Gastrocnemius medialis (tissue), 4 donors: ENCODE measurements at regions of chr5 and their contacts with region 1.

Region 1: DNA sequence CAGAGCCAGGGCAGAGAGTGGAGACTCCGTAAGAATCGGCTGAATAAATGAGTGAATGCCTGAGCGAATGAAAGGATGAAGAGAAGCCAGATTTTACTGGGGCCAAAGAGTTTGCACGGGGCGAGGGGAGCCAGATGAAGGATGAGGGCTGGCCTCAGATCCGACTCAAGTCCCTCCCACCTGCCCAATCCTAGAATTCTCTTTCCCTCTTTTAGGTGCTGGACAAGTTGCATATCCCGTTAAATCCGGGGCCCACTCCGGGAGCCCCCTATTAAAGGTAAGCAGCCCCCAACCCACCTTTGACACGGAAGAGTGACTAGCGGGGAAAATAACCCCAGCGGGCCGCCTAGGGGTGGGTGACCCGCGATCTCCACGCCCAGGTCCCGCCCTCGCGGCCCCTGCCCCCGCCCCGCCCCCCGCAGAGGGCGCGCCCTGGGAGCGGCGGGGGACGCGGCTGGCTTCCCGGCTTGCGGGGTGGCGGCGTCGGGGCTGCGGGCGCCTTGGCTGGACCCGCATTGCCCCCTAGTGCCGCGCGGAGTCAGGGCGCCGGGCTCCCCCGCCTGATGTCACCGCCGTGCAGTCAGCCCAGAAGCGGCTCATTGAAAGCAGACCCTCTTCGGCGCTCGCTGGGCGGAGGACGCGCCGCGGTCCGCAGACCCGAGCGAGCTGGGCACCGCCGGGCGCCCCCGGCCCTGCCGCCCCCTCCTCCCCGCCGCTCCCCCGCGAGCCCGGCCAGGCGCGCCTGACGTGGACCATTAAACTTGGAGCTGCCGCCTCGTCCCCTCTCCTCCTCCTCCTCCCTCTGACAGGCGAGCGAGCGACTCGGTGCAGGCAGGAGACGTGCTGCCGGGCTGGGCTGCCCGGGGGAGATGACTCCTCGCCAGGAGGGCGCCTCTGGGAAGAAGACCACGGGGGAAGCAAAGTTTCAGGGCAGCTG is at the start of gene ADRA1B:
- DNase-seq: peak; percentile 38 to 39
- ATAC-seq: peak; percentile 71 to 81
- H3K4me3 ChIP-seq: peak within 1 kb of the TSS; percentile 43 to 55 (median 44)
- H3K27ac ChIP-seq: peak within 1 kb of the TSS; percentile 35 to 47 (median 39)
- H3K4me1 ChIP-seq: no peaks in the 10 kb centered on the region
- H3K27me3 ChIP-seq: peaks cover 6 to 20% (median 7%) of the 10 kb centered on the region in 3 donors
- CTCF ChIP-seq: peak; percentile 28 to 80 (median 57)
- POLR2A ChIP-seq: no peak
- total RNA-seq, gene ADRA1B: 0.61 to 1.9 (median 0.94) TPM

Region 2: GRCh38 chr5:159444441-159445082 is 471.6 kb before region 1 on chr5:
- in situ Hi-C with region 1: loop called in 1 of 4 experiments (anchors 25 kb)
- intact Hi-C with region 1: loop called (anchors 5 kb)
- DNase-seq: no peak
- ATAC-seq: peak; percentile 39 to 58
- H3K4me3 ChIP-seq: no peak overlapping the region
- H3K27ac ChIP-seq: no peak overlapping the region
- H3K4me1 ChIP-seq: no peaks in the 10 kb centered on the region
- H3K27me3 ChIP-seq: no peaks in the 10 kb centered on the region
- CTCF ChIP-seq: peak in 2 of 5 experiments; percentile 32 to 39
- POLR2A ChIP-seq: no peak

Region 3: DNA sequence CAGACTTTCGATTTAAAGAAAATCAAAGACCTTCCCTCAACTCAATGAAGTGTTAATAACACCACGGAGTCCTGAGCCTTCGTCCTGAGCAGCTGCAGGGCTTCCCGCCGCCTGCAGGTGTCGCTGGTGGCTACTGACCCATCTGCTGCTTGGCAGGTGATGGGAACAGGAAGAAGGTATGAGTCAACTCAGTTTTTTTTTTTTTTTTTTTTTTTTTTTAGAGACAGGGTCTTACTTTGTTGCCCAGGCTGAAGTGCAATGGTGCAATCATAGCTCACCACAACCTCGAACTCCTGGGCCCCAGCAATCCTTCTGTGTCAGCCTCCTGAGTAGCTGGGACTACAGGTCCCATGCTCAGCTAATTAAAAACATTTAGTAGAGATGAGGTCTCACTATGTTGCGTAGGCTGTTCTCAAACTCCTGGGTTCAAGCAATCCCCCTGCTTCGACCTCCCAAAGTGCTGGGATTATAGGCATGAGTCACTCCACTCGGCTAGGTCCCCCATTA is 400.2 kb before region 1 on chr5:
- in situ Hi-C with region 1: loop called in 2 of 4 experiments (anchors 10 to 25 kb)
- intact Hi-C with region 1: loop called (anchors 1 kb)
- DNase-seq: peak in 1 of 2 donors; percentile 61
- ATAC-seq: peak; percentile 52 to 83
- H3K4me3 ChIP-seq: no peak overlapping the region
- H3K27ac ChIP-seq: no peak overlapping the region
- H3K4me1 ChIP-seq: peaks cover 0 to 1% of the 10 kb centered on the region in 2 donors
- H3K27me3 ChIP-seq: no peaks in the 10 kb centered on the region
- CTCF ChIP-seq: peak; percentile 51 to 76 (median 69)
- POLR2A ChIP-seq: no peak

Region 4: GRCh38 chr5:159531554-159532105 is 384.5 kb before region 1 on chr5:
- in situ Hi-C with region 1: no loop called
- intact Hi-C with region 1: loop called (anchors 5 kb)
- DNase-seq: no peak
- ATAC-seq: no peak
- H3K4me3 ChIP-seq: no peak overlapping the region
- H3K27ac ChIP-seq: no peak overlapping the region
- H3K4me1 ChIP-seq: no peaks in the 10 kb centered on the region
- H3K27me3 ChIP-seq: no peaks in the 10 kb centered on the region
- CTCF ChIP-seq: no peak
- POLR2A ChIP-seq: no peak

Region 5: DNA sequence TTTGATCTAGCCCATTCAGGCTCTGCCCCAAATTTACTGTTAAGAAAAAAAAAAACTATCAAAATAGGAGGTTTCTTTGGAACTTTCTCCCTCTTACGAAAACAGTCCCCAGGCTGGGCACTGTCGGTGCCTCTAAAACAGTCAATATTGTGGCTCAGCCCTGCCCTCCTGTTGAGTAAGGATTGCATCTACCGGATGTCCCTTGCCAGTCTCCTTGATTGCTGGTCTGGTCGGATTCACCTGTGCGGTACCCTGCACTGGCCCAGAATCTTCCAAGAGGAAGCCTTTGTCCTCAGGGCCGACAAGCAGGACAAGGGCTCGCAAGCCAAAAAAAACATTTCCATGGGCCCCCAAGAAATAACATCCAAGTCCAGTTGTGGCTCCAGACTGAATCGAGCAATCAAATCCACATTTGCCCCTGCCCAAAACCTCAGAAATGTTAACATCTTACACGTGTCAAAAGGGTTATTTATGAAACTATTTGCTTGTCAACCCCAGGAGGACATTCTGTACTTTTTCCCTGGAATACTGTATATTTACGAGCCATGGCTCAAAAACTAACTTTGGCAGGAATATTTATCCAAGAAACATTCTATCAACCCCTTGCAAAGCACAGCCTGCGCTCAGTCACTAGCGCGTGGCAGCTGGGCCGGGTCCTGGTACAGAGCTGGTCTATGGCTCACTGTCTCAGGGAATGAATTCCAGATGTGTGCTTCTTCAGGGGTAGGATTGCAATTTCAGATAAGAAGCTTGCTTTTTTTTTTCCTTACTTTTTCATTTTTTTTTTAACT is 129.1 kb before region 1 on chr5:
- in situ Hi-C with region 1: loop called in 1 of 4 experiments (anchors 10 kb)
- intact Hi-C with region 1: loop called (anchors 10 kb)
- DNase-seq: peak; percentile 66 to 73
- ATAC-seq: peak; percentile 72 to 77
- H3K4me3 ChIP-seq: no peak overlapping the region
- H3K27ac ChIP-seq: peak overlapping the region; percentile 40 to 59 (median 50)
- H3K4me1 ChIP-seq: no peaks in the 10 kb centered on the region
- H3K27me3 ChIP-seq: no peaks in the 10 kb centered on the region
- CTCF ChIP-seq: no peak
- POLR2A ChIP-seq: no peak

Region 6: DNA sequence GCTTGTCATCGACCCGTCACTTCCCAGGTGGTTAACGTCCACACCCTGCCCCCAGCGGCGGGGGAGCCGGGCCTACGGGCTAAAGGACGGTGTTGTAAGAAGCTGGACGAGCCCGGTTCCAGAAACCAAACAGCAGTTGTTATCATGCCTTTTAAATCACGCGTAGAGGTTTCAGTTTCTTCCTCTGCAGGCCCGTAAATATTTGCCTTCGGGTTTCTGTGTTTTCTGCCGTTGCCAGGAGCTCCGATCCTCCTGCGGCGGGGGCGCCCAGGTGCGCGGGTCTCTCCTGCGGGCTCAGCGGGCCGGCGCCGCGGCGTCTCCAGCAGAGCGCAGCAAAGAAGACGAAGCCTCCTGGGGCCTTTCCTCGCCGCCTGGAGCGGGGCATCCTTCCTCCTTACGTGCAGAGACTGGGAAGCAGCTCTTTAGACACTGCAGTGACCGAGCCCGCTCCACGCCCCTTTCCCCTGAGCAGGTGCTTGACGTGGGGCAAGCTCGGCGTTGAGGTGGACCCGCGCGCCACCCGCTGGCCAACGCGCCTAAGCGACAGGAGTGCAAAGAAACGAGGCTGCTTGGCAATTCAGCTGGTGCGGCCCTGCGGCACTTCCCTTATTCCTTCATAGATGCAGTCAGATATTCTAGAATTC is 71.0 kb after region 1 on chr5:
- in situ Hi-C with region 1: no loop called
- intact Hi-C with region 1: loop called (anchors 5 kb)
- DNase-seq: peak; percentile 38 to 66
- ATAC-seq: peak; percentile 70 to 81
- H3K4me3 ChIP-seq: peak overlapping the region; percentile 45 to 61 (median 48)
- H3K27ac ChIP-seq: no peak overlapping the region
- H3K4me1 ChIP-seq: peaks cover 3 to 8% of the 10 kb centered on the region in 2 donors
- H3K27me3 ChIP-seq: peaks cover 0 to 12% (median 7%) of the 10 kb centered on the region in 3 donors
- CTCF ChIP-seq: peak; percentile 61 to 77 (median 71)
- POLR2A ChIP-seq: no peak